Aorta (tissue), 5 donors: ENCODE measurements at regions of chr1 and their contacts with region 1.

Region 1: GRCh38 chr1:205211169-205211838 is at the start of gene DSTYK:
- DNase-seq: peak; percentile 97
- ATAC-seq: peak; percentile 98
- H3K4me3 ChIP-seq: peak within 1 kb of the TSS; percentile 74 to 75
- H3K27ac ChIP-seq: peak within 1 kb of the TSS; percentile 31 to 42
- H3K4me1 ChIP-seq: peaks cover 0 to 8% of the 10 kb centered on the region in 2 donors
- H3K27me3 ChIP-seq: no peaks in the 10 kb centered on the region
- total RNA-seq, gene DSTYK: 14.3 to 17.6 TPM

Region 2: DNA sequence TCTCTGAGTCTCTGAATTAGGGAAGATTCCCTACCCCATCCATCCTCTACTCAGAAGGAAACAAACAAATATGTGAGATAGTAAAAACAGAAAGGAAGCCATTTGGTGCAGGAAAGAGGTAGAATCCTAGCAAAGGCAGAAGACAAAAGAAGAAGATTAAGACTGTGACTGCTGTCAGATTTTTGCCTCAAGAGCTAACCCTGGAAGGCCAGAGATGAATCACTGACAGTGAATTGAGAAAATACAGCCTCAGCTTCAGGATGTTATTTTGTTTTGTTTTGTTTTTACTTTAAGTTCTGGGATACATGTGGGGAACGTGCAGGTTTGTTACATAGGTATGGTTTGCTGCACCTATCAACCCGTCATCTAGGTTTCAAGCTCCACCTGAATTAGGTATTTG is 31.5 kb before region 1 on chr1:
- intact Hi-C with region 1: loop called in 1 of 2 experiments (anchors 5 kb)
- DNase-seq: no peak
- ATAC-seq: no peak
- H3K4me3 ChIP-seq: no peak overlapping the region
- H3K27ac ChIP-seq: no peak overlapping the region
- H3K4me1 ChIP-seq: peaks cover 0 to 2% of the 10 kb centered on the region in 2 donors
- H3K27me3 ChIP-seq: no peaks in the 10 kb centered on the region